ENCODE measurements at regions of chr6 and their contacts with region 1.

Region 1: GRCh38 chr6:30497714-30498113 is 8.4 kb downstream of the HLA-E start:
- DNase-seq: no peak
- H3K4me3 Mint-ChIP-seq: no peak overlapping the region
- H3K27ac Mint-ChIP-seq: no peak overlapping the region
- H3K4me1 Mint-ChIP-seq: peaks cover 8% of the 10 kb centered on the region
- H3K27me3 Mint-ChIP-seq: no peaks in the 10 kb centered on the region
- CTCF ChIP-seq: no peak

Region 2: DNA sequence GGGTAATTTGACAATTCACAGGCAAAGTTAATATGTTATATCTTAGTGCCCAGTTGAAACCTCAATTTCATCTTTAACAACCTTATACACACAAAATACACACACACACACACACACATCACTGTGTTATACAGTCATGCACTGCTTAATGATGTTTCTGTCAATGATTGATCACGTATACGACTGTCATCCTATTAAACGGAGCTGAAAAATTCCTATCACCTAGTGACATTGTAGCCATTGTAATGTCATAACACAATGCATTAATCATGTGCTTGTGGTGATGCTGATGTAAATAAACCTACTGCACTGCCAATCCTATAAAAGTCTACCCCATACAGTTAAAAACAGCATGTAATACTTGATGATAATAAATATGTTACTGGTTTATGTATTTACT is 73.2 kb before region 1 on chr6:
- CTCF ChIA-PET with region 1: no interaction called
- POLR2A ChIA-PET with region 1: no interaction called
- intact Hi-C with region 1: no loop called
- DNase-seq: no peak
- H3K4me3 Mint-ChIP-seq: no peak overlapping the region
- H3K27ac Mint-ChIP-seq: no peak overlapping the region
- H3K4me1 Mint-ChIP-seq: no peaks in the 10 kb centered on the region
- H3K27me3 Mint-ChIP-seq: peaks cover 90% of the 10 kb centered on the region
- CTCF ChIP-seq: no peak

Region 3: GRCh38 chr6:30515932-30516753 is 18.4 kb after region 1 on chr6:
- CTCF ChIA-PET with region 1: interaction called, 6 read pairs
- POLR2A ChIA-PET with region 1: interaction called, 8 read pairs
- intact Hi-C with region 1: loop called (anchors 2 kb)
- DNase-seq: peak; percentile 95
- H3K4me3 Mint-ChIP-seq: peak overlapping the region; percentile 75
- H3K27ac Mint-ChIP-seq: peak overlapping the region; percentile 98
- H3K4me1 Mint-ChIP-seq: peaks cover 5% of the 10 kb centered on the region
- H3K27me3 Mint-ChIP-seq: no peaks in the 10 kb centered on the region
- CTCF ChIP-seq: no peak

Region 4: DNA sequence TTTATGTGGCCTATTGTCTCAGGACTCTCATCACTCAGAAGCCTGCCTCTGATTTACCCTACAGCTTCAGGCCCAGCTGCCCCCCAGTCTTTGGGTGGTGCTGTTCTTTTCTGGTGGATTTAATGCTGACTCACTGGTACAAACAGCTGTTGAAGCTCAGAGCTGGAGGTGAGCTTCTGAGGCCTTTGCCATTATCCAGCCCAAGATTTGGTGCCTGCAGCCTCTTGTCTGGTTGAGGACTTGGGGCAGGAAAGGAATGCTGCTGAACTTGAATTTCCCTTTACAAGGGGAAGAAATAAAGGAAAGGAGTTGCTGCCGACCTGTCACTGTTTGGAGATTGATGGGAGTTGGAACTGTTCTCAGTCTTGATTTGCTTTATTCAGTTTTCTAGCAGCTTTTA is 93.3 kb after region 1 on chr6:
- CTCF ChIA-PET with region 1: no interaction called
- POLR2A ChIA-PET with region 1: no interaction called
- intact Hi-C with region 1: no loop called
- DNase-seq: no peak
- H3K4me3 Mint-ChIP-seq: no peak overlapping the region
- H3K27ac Mint-ChIP-seq: no peak overlapping the region
- H3K4me1 Mint-ChIP-seq: no peaks in the 10 kb centered on the region
- H3K27me3 Mint-ChIP-seq: no peaks in the 10 kb centered on the region
- CTCF ChIP-seq: no peak

Region 5: GRCh38 chr6:30742316-30743098 is 244.8 kb after region 1 on chr6 and contains the start of gene FLOT1:
- CTCF ChIA-PET with region 1: no interaction called
- POLR2A ChIA-PET with region 1: no interaction called
- intact Hi-C with region 1: no loop called
- DNase-seq: peak; percentile 99
- H3K4me3 Mint-ChIP-seq: peak within 1 kb of the TSS; percentile 91
- H3K27ac Mint-ChIP-seq: peak within 1 kb of the TSS; percentile 90
- H3K4me1 Mint-ChIP-seq: peaks cover 38% of the 10 kb centered on the region
- H3K27me3 Mint-ChIP-seq: no peaks in the 10 kb centered on the region
- CTCF ChIP-seq: no peak
- total RNA-seq, gene FLOT1: 61.8 and 73.7 TPM in 2 replicates